ENCODE measurements at regions of chr2 and their contacts with region 1.

Region 1: DNA sequence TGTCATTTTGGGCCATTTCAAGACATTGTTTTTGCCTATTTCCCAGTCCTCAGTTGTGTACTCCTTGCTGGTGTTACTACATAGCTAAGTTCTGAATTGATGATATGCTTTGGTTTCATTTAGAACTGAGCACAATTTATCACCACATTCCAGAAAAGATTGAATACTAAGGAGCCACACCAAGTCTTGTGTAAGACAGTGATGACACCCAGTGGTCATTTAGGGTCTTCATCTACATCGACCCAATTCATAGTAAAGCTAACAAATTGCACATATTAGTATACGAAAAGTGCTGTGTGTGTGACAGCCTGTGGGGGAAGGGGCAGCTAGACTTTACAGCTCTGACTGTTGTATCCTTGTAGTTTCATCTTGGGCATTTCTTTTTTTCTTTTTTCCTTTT is 10.9 kb upstream of the DLX2 start:
- DNase-seq: no peak
- ATAC-seq: peak; percentile 42
- H3K4me3 Mint-ChIP-seq: no peak overlapping the region
- H3K27ac Mint-ChIP-seq: no peak overlapping the region
- H3K4me1 Mint-ChIP-seq: peaks cover 10% of the 10 kb centered on the region
- H3K27me3 Mint-ChIP-seq: peaks cover 36% of the 10 kb centered on the region
- CTCF ChIP-seq: 0 out of 2 replicates have a peak, but pooled peaks have one; percentile 27

Region 2: DNA sequence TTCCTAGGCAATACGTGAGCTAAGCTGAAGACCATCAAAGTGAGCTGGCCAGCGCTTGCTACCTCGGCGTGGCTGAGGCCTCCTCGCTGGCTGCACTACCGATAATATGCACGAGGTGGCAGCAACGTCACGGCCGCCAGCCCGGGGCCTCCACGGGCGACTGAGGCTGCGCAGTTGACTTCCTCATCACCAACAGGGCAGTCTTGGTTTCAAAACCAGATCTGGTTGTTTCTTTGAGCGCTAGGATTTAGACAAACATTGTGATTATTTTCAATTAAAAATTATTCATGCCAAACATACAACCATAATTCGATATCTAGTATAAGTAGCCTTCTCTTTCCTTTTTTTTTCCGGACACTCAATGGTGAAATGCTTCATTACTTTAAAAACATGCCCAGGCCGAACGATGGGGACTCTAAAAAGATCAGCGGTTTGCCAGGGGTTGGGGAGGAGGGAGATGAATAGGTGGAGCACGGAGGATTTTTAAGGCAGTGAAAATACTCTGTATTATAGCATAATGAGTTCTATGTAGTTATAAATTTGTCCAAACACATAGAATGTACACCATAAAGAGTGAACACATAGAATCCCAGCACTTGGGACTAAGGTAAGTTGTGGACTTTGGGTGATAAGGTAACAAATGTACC is 539.3 kb before region 1 on chr2:
- CTCF ChIA-PET with region 1: interaction called, 14 read pairs
- POLR2A ChIA-PET with region 1: no interaction called
- DNase-seq: peak; percentile 84
- ATAC-seq: peak; percentile 97
- H3K4me3 Mint-ChIP-seq: no peak overlapping the region
- H3K27ac Mint-ChIP-seq: no peak overlapping the region
- H3K4me1 Mint-ChIP-seq: peaks cover 10% of the 10 kb centered on the region
- H3K27me3 Mint-ChIP-seq: no peaks in the 10 kb centered on the region; the same call in 1 of the 2 replicates
- CTCF ChIP-seq: peak; percentile 95

Region 3: GRCh38 chr2:171793691-171794678 is 319.6 kb before region 1 on chr2:
- CTCF ChIA-PET with region 1: interaction called, 12 read pairs
- POLR2A ChIA-PET with region 1: no interaction called
- DNase-seq: no peak
- ATAC-seq: peak; percentile 14
- H3K4me3 Mint-ChIP-seq: no peak overlapping the region
- H3K27ac Mint-ChIP-seq: 0 out of 2 replicates have a peak overlapping the region, but pooled peaks have one; percentile 9
- H3K4me1 Mint-ChIP-seq: peaks cover 54% of the 10 kb centered on the region
- H3K27me3 Mint-ChIP-seq: no peaks in the 10 kb centered on the region
- CTCF ChIP-seq: no peak

Region 4: GRCh38 chr2:172153156-172153555 is 39.5 kb after region 1 on chr2:
- CTCF ChIA-PET with region 1: no interaction called
- POLR2A ChIA-PET with region 1: no interaction called
- DNase-seq: no peak
- ATAC-seq: no peak
- H3K4me3 Mint-ChIP-seq: no peak overlapping the region
- H3K27ac Mint-ChIP-seq: no peak overlapping the region
- H3K4me1 Mint-ChIP-seq: no peaks in the 10 kb centered on the region
- H3K27me3 Mint-ChIP-seq: peaks cover 41% of the 10 kb centered on the region
- CTCF ChIP-seq: no peak

Measured in WTC11 (cell line).